Ovary (tissue), 10 donors: ENCODE measurements at regions of chr10 and their contacts with region 1.

Region 1: GRCh38 chr10:13299437-13300287 is at the start of gene PHYH:
- DNase-seq: peak; percentile 85 to 92 (median 89)
- H3K4me3 ChIP-seq: peak within 1 kb of the TSS; percentile 57
- H3K27ac ChIP-seq: peak within 1 kb of the TSS; percentile 95 to 98
- H3K4me1 ChIP-seq: peaks cover 3% of the 10 kb centered on the region
- H3K27me3 ChIP-seq: no peaks in the 10 kb centered on the region
- CTCF ChIP-seq: peak in 2 of 3 donors; percentile 1 to 22
- EP300 ChIP-seq: no peak
- POLR2A ChIP-seq: peak; percentile 74
- total RNA-seq, gene PHYH: 20.0 to 49.7 (median 39.5) TPM

Region 2: GRCh38 chr10:13348216-13349017 is 48.8 kb after region 1 on chr10 and contains the start of gene SEPHS1:
- intact Hi-C with region 1: loop called in 1 of 4 experiments (anchors 5 kb)
- DNase-seq: peak; percentile 60 to 78 (median 72)
- H3K4me3 ChIP-seq: peak within 1 kb of the TSS; percentile 88
- H3K27ac ChIP-seq: peak within 1 kb of the TSS; percentile 95 to 99
- H3K4me1 ChIP-seq: peaks cover 6% of the 10 kb centered on the region
- H3K27me3 ChIP-seq: no peaks in the 10 kb centered on the region
- CTCF ChIP-seq: no peak
- EP300 ChIP-seq: no peak
- POLR2A ChIP-seq: no peak
- total RNA-seq, gene SEPHS1: 27.2 to 62.0 (median 50.6) TPM